MCF 10A (cell line): ENCODE measurements at regions of chr1 and their contacts with region 1.

Region 1: GRCh38 chr1:231818337-231818736 is 191.7 kb downstream of the DISC1 start:
- DNase-seq: no peak
- H3K4me3 Mint-ChIP-seq: no peak overlapping the region
- H3K27ac Mint-ChIP-seq: no peak overlapping the region
- H3K4me1 Mint-ChIP-seq: peaks cover 9% of the 10 kb centered on the region
- H3K27me3 Mint-ChIP-seq: no peaks in the 10 kb centered on the region
- CTCF ChIP-seq: no peak

Region 2: GRCh38 chr1:231734417-231734816 is 83.9 kb before region 1 on chr1:
- CTCF ChIA-PET with region 1: no interaction called
- POLR2A ChIA-PET with region 1: no interaction called
- intact Hi-C with region 1: no loop called
- DNase-seq: no peak
- H3K4me3 Mint-ChIP-seq: no peak overlapping the region
- H3K27ac Mint-ChIP-seq: no peak overlapping the region
- H3K4me1 Mint-ChIP-seq: no peaks in the 10 kb centered on the region
- H3K27me3 Mint-ChIP-seq: no peaks in the 10 kb centered on the region
- CTCF ChIP-seq: no peak

Region 3: GRCh38 chr1:231800108-231800507 is 18.2 kb before region 1 on chr1:
- CTCF ChIA-PET with region 1: interaction called, 3 read pairs
- POLR2A ChIA-PET with region 1: interaction called, 12 read pairs
- intact Hi-C with region 1: no loop called
- DNase-seq: peak; percentile 85
- H3K4me3 Mint-ChIP-seq: peak overlapping the region; percentile 56
- H3K27ac Mint-ChIP-seq: peak overlapping the region; percentile 92
- H3K4me1 Mint-ChIP-seq: peaks cover 31% of the 10 kb centered on the region
- H3K27me3 Mint-ChIP-seq: no peaks in the 10 kb centered on the region
- CTCF ChIP-seq: no peak

Region 4: DNA sequence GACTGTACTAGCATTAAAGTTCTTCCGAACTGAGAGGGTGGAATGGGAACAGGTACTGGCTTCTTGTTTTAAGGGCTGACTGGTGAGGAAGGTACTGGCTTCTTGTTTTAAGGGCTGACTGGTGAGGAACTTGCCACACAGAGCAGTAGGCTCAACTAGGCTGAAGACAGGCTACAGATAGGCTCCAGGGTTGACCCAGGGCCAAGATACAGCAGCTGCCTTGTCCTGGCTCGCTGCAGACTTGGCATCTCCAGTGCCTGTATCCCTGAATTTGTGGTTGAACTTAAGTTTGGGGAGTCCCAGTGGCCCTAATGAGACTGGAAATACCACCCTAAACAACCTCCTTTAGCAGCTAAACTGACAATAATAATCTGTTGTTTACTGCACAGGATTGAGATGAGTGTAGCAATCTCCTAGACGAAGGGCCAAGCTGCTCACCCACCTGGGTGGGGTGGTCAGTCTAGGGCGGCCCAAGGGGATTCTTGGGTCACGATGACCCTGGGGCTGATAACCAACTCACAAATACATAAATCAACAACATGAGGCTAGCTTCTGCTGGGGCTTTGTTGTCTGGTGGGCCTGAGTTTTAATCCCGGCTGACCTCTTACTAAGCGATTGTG is 35.4 kb after region 1 on chr1:
- CTCF ChIA-PET with region 1: no interaction called
- POLR2A ChIA-PET with region 1: no interaction called
- intact Hi-C with region 1: no loop called
- DNase-seq: no peak
- H3K4me3 Mint-ChIP-seq: no peak overlapping the region
- H3K27ac Mint-ChIP-seq: no peak overlapping the region
- H3K4me1 Mint-ChIP-seq: no peaks in the 10 kb centered on the region
- H3K27me3 Mint-ChIP-seq: no peaks in the 10 kb centered on the region
- CTCF ChIP-seq: no peak